Prostate gland (tissue), 2 donors: ENCODE measurements at regions of chr2 and their contacts with region 1.

Region 1: DNA sequence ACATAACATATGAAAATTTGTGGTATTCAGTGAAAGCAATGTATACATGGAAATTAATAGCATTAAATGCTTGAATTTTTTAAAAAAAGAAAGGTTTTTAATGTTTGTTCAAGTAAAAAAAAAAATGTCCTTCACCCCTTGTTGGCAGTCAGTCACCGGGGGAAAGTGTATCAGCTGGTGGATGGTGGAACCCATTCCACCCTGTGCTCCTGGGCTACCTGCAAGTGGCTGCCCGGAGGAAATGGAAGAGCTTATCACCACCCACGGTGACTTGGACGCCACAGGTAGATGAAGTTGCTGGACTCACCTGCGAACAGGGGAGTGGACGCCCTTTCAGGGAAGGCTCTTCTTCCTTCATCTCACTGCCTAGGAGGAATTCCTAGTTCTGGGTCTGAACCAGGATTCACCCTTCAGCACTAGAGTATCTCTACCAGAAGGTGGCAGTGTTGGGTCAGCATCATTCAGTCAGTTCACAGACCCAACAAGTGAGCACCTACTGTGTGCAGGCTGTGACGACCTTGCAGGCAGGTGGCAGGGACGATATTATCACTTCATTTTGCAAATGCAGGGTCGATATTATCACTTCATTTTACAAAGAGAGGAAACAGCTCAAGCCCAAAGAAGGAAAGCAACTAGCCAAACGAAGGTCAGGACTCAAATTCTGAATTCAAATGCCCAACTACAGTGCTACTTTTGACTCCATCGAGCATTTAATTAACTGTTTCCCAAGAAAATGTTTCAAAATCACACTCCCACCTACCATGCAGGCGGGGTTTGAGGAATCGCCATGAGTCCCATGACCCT is 35.8 kb downstream of the CIB4 start:
- DNase-seq: peak; percentile 48
- H3K4me3 ChIP-seq: no peak overlapping the region
- H3K27ac ChIP-seq: peak overlapping the region; percentile 68 to 87
- H3K4me1 ChIP-seq: no peaks in the 10 kb centered on the region
- H3K27me3 ChIP-seq: no peaks in the 10 kb centered on the region
- CTCF ChIP-seq: peak; percentile 70 to 94 (median 88)
- POLR2A ChIP-seq: no peak

Region 2: GRCh38 chr2:26745609-26746327 is 140.4 kb after region 1 on chr2:
- intact Hi-C with region 1: loop called (anchors 1 kb)
- DNase-seq: peak; percentile 85
- H3K4me3 ChIP-seq: no peak overlapping the region
- H3K27ac ChIP-seq: no peak overlapping the region
- H3K4me1 ChIP-seq: no peaks in the 10 kb centered on the region
- H3K27me3 ChIP-seq: no peaks in the 10 kb centered on the region
- CTCF ChIP-seq: peak; percentile 77 to 95 (median 94)
- POLR2A ChIP-seq: no peak